AG04449 (cell line): ENCODE measurements at regions of chr6 and their contacts with region 1.

Region 1: DNA sequence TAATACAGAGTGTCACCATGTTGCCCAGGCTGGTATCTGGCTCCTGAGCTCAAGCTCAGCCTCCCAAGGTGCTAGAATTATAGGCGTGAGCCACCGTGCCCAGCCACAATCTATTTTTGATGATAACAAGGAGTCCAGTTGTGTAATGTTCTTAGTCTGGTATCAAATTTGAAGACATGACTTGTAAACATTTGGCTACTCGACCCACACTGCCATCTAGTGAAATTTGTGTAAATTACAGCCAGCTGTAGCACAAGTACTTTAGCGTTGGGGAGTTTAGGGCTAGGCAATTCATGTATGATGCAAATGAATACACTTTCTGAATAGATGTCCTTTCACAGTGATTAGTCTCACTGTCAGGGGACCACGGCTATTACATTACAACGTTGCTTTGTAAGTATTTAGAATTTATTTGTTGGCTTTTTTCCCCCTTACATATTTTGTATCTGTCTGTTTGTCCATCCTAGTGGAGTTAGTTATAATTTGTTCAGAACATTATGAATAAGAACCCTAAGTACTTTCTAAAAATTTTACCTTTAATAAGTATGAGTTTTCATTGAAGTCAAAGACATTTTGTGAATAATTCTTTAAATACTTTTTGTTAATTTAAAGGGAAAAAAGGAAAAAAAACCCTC is 139.7 kb downstream of the PRDM13 start:
- DNase-seq: peak; percentile 19
- H3K4me3 ChIP-seq: no peak overlapping the region
- CTCF ChIP-seq: peak; percentile 74

Region 2: DNA sequence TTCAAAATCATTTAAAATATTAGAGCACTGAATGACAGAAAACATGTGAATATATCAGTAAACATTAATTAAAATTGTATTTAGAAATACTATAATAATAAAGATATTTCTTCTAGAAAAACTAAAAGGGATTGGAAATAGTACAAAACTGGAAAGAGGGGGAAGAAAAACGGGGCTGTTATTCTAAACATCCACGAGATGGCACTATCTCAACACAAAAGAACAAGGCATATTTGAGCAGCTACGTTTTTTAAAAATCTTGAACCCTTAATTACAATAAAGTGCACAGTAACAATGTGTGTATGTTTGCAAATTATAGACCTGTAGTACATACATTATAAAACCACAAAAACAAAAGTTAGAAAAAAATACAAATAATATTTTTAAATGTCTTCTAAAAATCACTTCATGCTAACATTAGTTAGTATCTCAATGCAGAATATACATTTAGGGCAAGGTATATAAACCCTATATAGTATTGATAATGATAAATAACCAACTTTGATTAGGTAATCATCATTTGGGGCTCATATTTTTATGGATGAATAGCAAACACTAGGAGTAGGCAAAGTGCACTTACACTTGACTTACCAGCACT is 278.8 kb before region 1 on chr6:
- CTCF ChIA-PET with region 1: interaction called, 35 read pairs
- POLR2A ChIA-PET with region 1: no interaction called
- DNase-seq: no peak
- H3K4me3 ChIP-seq: no peak overlapping the region
- CTCF ChIP-seq: peak; percentile 44

Region 3: DNA sequence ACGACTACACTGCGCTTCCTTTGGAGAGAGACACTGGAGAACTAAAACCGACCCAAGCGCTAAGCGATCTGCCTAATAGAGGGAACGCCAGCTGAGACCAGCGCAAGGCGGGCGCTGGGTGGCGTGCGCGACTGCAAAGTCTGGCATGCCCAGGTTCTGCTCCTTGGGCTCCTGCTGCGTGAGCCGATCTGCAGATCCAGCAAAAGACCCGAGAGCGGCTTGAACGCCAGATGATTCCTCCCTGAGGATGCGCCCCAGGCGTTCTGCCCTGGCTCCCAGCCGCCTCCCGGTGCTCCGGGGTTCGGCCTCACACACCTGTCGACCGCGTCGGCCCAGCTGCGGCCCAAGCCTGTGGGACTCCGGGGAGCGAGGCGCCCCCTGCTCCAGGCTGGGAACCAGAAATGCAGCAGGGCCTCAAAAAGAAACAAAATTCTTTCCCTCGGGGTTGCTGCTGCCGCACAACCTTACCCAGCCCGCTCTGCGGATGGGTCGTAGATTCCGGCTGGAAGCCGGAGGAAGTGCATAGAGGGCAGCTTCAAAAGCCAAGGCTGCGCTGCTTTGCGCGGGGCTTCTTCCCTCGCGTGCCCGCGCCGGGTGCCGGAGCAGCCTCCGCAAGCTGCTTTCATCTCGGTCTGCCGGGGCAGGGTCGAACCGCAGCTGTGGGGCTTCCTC is 157.6 kb before region 1 on chr6:
- CTCF ChIA-PET with region 1: interaction called, 27 read pairs
- POLR2A ChIA-PET with region 1: no interaction called
- DNase-seq: no peak
- H3K4me3 ChIP-seq: peak overlapping the region; percentile 53
- CTCF ChIP-seq: peak; percentile 64

Region 4: DNA sequence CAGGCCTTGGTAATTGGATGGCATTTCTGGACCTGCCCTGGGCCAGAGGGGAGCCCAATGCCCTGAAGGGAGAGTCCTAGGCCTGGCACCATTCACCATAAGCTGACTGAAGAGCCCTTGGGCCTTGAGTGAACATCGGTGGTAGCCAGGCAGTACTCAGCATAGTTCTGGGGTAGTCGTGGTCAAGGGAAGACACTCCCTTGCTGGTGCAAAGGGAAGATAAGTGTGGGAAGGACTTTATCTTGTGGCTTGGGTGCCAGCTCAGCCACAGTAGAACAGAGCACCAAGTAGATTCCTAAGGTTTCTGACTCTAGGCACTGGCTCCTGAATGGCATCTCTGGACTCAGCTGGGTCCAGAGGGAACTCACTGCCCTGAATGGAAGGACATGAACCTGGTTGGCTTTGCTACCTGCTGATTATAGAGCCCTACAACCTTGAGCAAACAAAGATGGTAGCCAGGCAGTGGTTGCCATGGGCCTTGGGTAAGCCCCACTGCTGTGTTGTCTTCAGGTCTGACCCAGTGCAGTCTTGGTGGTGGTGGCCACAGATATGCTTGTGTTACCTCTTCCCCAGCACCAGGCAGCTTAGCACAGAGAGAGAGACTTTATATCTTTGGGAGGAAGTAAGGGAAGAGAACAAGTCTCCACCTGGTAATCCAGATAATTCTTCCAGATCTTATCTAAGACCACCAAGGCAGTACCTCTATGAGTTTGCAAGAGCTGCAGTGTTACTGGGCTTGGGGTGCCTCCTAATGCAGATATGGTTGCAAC is 56.3 kb before region 1 on chr6:
- CTCF ChIA-PET with region 1: no interaction called
- POLR2A ChIA-PET with region 1: no interaction called
- DNase-seq: no peak
- H3K4me3 ChIP-seq: no peak overlapping the region
- CTCF ChIP-seq: no peak